Activated naive CD4-positive, alpha-beta T cell treated with anti-CD3 and anti-CD28 coated beads for 36 hours (primary cell): ENCODE measurements at regions of chr5 and their contacts with region 1.

Region 1: DNA sequence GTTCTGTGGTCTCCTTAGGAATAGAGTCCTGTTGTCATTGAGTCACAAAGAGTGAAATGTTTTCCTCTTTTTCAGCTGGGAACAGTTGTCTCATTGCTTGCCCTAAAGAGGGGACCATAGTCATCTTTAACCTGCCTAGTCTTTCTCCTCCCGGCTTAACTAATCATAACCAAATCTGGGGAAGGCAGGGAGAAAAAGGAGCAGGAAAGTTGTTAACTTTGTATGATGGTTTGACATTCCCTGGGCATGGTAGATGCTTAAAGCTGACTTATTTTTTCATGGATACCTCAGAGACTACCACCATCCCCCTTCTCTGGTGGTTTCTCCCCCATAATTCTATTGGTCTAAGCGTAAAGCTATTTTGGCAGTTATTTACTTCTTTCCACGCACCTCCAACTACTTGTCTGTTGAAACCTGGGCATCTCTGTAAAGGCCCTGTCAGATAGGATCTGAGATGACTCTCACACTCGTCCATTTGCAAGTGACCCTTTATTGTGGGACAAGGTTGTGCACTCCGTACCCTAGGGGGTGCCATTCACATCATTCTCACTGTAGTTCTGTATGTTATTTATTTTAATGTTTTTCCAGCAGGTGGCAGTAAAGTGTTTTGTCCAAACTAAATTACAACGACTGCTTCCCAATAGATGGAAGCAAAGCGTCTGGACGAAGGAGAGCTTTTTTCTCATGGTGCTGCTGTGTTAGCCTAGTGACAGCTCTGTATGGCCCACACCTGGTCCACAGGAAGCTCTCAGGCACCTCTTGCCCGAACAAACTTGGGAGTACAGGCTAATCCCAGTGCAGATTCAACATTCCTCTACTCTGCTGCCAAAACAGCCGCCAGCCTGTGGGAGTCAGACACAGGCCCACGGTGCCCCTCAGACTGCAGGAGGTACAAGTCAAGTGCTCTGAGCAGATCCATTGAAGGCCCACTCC is 3.0 kb upstream of the FAM13B start:
- DNase-seq: peak; percentile 76
- H3K4me3 Mint-ChIP-seq: no peak overlapping the region
- H3K27ac Mint-ChIP-seq: no peak overlapping the region
- H3K4me1 Mint-ChIP-seq: peaks cover 31% of the 10 kb centered on the region
- H3K27me3 Mint-ChIP-seq: no peaks in the 10 kb centered on the region

Region 2: DNA sequence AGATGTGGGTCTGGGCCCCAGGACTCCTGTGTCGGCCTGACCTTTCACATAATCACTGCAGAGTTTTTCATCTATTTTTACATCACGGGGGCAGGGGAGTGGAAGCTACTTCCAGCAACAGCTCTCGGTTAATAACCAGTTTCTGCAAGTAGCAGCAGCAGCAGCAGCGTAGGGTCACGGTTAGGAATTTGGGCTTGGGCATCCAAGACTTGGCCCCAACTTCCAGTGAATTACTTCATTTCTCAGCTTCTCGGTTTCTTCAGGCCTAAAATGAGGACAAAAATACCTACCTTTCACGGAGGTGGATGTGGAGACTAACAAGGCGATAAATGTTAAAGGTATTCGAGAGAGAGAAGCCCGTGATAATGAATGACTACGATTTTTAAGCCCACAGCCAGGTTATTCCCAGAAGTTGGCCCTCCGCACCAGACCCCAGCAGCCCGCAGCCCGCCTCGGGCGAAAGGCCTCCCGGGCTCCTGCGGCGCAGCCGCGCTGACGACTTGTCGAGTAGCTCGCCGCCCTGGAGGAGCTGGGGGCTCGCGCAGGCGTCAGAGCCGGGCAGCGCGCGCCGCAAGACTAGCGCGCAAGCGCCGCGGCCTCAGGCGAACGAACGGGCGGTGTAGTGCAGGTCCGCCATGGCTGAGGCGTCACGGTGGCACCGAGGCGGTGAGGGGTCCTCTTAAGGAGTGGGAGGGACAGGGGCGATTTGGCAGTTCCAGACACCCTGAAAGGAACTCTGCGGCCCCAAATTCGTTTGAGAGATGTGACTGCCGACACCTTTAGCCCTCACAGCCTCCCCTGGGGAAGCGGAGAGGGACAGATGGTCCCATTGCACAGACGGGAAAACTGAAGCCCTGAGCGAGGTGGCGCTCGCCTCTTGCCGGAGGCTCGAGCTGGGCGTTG is 146.8 kb before region 1 on chr5 and contains the start of gene PKD2L2:
- CTCF ChIA-PET with region 1: interaction called, 8 read pairs
- intact Hi-C with region 1: loop called (anchors 1 kb)
- DNase-seq: peak; percentile 84
- H3K4me3 Mint-ChIP-seq: peak within 1 kb of the TSS; percentile 88
- H3K27ac Mint-ChIP-seq: peak within 1 kb of the TSS; percentile 87
- H3K4me1 Mint-ChIP-seq: peaks cover 21% of the 10 kb centered on the region
- H3K27me3 Mint-ChIP-seq: peaks cover 4% of the 10 kb centered on the region
- total RNA-seq, gene PKD2L2: not detected

Region 3: DNA sequence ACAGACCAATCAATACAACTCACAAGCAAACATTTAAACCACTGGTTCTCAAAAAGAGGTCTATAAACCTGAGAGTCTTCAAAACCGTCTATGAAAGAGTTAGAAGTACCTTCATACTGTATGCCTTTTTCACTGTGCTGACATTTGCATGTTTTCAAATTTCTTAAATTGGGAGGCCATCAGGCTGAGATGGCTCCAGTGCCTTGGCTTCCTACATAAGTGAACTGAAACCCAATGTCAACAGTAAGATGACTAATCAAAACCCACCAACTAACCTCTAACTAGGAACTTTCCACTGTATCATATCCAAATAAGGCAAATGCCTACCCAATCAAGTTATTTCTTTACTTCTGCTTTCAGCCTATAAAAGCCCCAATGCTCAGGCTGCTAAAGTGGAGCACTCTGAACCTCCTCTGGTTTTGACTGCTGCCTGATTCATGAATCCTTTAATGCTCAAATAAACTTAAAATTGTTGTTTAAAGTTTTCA is 38.1 kb before region 1 on chr5:
- CTCF ChIA-PET with region 1: interaction called, 3 read pairs
- intact Hi-C with region 1: loop called (anchors 2 kb)
- DNase-seq: peak; percentile 50
- H3K4me3 Mint-ChIP-seq: no peak overlapping the region
- H3K27ac Mint-ChIP-seq: peak overlapping the region; percentile 50
- H3K4me1 Mint-ChIP-seq: peaks cover 36% of the 10 kb centered on the region
- H3K27me3 Mint-ChIP-seq: no peaks in the 10 kb centered on the region

Region 4: DNA sequence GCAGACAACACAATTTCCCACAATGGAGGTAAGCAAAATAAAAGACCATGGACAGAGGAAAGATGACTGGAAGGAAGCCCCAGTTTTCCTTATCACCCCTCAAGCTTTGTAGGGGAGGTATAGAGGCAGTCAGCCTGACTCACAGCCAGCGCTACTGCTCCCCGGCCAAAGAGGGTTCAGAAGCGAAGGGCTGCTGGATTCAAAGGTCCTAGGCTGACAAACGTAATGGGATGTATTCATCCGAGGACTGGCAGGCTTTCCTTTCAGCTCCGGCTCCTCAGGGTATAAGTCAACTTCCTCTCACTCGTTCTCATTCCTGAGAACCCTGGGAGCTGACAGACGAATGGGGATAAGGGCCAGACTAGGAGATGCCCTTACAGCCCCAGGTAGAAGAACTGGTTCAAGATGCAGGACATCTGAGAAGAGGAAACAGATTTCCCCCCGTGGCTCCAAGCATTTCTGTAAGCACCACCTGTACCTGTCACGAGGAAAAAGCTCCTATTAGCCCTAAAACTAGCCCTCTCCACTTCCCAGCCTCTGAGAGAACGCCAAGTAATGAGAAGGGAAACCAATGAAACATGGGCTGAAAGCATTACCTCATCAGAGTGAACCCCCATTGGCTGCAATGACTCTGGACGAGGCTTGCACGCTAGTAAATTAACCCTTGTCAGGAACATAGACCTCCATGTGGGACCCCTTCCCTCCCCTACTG is 19.1 kb after region 1 on chr5:
- CTCF ChIA-PET with region 1: interaction called, 243 read pairs
- intact Hi-C with region 1: no loop called
- DNase-seq: no peak
- H3K4me3 Mint-ChIP-seq: no peak overlapping the region
- H3K27ac Mint-ChIP-seq: no peak overlapping the region
- H3K4me1 Mint-ChIP-seq: peaks cover 8% of the 10 kb centered on the region
- H3K27me3 Mint-ChIP-seq: no peaks in the 10 kb centered on the region

Region 5: GRCh38 chr5:138077065-138077696 is 41.3 kb after region 1 on chr5:
- CTCF ChIA-PET with region 1: interaction called, 34 read pairs
- intact Hi-C with region 1: loop called (anchors 1 kb)
- DNase-seq: peak; percentile 77
- H3K4me3 Mint-ChIP-seq: no peak overlapping the region
- H3K27ac Mint-ChIP-seq: no peak overlapping the region
- H3K4me1 Mint-ChIP-seq: peaks cover 14% of the 10 kb centered on the region
- H3K27me3 Mint-ChIP-seq: no peaks in the 10 kb centered on the region

Region 6: DNA sequence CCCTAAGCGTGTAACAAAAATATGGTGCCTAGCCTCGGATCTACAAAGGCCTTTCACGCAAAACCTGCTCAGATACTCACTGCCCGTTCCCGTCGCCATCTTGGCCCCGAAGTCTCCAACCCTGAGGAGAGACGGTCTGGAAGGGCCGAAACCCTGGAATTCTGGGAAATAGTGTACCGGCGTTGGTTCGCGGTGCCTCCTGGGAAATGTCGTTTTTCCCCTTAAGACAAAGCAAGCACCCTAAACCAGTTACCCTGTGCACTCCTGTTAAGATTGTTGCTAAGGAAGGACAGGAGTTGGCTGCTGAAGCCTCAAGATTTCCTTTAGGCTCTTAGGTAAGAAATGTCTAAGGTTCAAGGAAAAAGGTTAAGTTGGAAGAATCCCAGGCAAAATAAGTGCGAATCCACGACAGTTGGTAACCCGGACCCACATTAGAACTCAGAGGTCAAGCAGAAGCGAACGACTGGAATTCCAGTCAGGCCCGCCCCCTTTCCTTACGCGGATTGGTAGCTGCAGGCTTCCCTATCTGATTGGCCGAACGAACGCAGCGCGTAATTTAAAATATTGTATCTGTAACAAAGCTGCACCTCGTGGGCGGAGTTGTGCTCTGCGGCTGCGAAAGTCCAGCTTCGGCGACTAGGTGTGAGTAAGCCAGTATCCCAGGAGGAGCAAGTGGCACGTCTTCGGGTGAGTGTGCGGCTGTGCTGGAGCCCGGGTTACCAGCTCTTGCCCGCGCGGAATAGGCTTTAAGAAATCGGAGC is 142.8 kb after region 1 on chr5 and contains the starts of genes BRD8 and KIF20A:
- CTCF ChIA-PET with region 1: interaction called, 9 read pairs
- intact Hi-C with region 1: loop called (anchors 1 kb)
- DNase-seq: peak; percentile 98
- H3K4me3 Mint-ChIP-seq: no peak within 1 kb of the TSS
- H3K27ac Mint-ChIP-seq: peak within 1 kb of the TSS; percentile 63
- H3K4me1 Mint-ChIP-seq: peaks cover 12% of the 10 kb centered on the region
- H3K27me3 Mint-ChIP-seq: no peaks in the 10 kb centered on the region
- total RNA-seq, gene BRD8: 94.8 to 95.6 TPM
- total RNA-seq, gene KIF20A: 78.9 to 81.9 TPM

Region 7: GRCh38 chr5:138331449-138332368 is 295.8 kb after region 1 on chr5 and contains the start of gene CDC25C:
- CTCF ChIA-PET with region 1: no interaction called
- intact Hi-C with region 1: loop called (anchors 5 kb)
- DNase-seq: peak; percentile 99
- H3K4me3 Mint-ChIP-seq: peak within 1 kb of the TSS; percentile 81
- H3K27ac Mint-ChIP-seq: peak within 1 kb of the TSS; percentile 83
- H3K4me1 Mint-ChIP-seq: peaks cover 9% of the 10 kb centered on the region
- H3K27me3 Mint-ChIP-seq: no peaks in the 10 kb centered on the region
- total RNA-seq, gene CDC25C: 23.2 to 26.6 TPM